Mammary epithelial cell (primary cell): ENCODE measurements at regions of chr11 and their contacts with region 1.

Region 1: DNA sequence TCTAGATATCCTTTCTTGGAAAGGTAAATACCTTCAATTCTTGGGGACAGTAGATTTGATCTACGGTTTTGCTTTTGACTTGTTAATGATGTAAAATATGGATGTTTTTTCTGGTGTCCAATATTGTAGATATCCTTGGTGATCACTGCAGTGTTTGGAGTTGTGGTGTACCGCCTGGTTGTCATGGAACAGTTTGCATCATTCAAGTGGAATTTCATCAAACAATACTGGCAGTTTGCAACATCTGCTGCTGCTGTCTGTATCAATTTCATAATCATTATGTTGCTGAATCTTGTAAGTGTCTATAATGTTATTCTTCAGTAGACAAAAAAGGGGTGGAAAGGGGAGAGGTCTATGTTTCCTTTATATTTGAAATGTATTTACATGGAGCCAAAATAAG is 27.4 kb upstream of the MUC15 start:
- DNase-seq: peak; percentile 81
- H3K4me3 ChIP-seq: no peak overlapping the region
- H3K27ac ChIP-seq: peak overlapping the region; percentile 33
- H3K4me1 ChIP-seq: no peaks in the 10 kb centered on the region
- H3K27me3 ChIP-seq: no peaks in the 10 kb centered on the region
- CTCF ChIP-seq: no peak

Region 2: GRCh38 chr11:26399336-26399735 is 200.1 kb before region 1 on chr11:
- CTCF ChIA-PET with region 1: no interaction called
- dilution Hi-C with region 1: no loop called
- in situ Hi-C with region 1: no loop called
- intact Hi-C with region 1: no loop called
- DNase-seq: no peak
- H3K4me3 ChIP-seq: no peak overlapping the region
- H3K27ac ChIP-seq: no peak overlapping the region
- H3K4me1 ChIP-seq: no peaks in the 10 kb centered on the region
- H3K27me3 ChIP-seq: no peaks in the 10 kb centered on the region
- CTCF ChIP-seq: no peak

Region 3: DNA sequence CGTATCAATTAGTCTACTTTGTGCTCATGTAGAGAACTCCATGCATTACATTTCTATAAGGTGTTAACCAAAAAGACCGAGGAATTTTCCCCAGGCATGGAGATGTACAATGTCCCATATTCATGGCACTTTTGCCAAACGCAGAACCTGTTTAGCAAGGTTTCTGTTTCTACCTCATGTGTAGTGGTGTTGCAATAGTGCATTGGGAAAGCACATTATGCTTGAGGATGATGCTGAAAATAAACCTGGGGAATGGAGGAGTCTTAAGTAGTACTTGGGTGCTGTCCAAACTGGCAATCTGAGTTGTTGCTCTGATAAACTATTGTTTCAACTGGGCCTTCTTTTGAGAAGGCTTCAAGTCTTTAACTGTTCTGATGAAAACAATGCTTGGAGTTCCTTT is 15.9 kb before region 1 on chr11:
- CTCF ChIA-PET with region 1: no interaction called
- dilution Hi-C with region 1: no loop called
- in situ Hi-C with region 1: no loop called
- intact Hi-C with region 1: loop called (anchors 2 kb)
- DNase-seq: peak; percentile 91
- H3K4me3 ChIP-seq: peak overlapping the region in 1 of 3 experiments; percentile 5
- H3K27ac ChIP-seq: peak overlapping the region; percentile 52
- H3K4me1 ChIP-seq: peaks cover 21% of the 10 kb centered on the region
- H3K27me3 ChIP-seq: no peaks in the 10 kb centered on the region
- CTCF ChIP-seq: no peak

Region 4: DNA sequence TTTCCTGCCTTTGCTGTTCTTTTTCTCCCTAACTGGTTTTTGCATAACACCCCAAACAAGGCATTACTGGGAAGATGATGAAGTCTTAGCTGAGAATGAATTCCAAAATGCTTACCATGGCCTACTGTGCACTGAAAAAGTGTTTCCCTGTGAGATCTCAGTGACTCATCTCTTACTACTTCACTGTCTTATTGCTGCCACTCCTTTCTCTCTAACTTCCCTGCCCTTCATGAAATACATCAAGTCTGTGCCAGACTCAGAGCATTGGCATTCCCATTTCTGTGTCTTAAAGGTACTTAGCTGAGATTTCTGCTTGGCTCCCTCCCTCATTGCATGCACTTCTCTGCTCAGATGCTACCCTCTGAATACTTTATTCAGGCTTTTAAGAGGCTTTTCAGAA is 21.7 kb after region 1 on chr11:
- CTCF ChIA-PET with region 1: no interaction called
- dilution Hi-C with region 1: no loop called
- in situ Hi-C with region 1: no loop called
- intact Hi-C with region 1: loop called (anchors 1 kb)
- DNase-seq: peak; percentile 91
- H3K4me3 ChIP-seq: no peak overlapping the region
- H3K27ac ChIP-seq: peak overlapping the region; percentile 98
- H3K4me1 ChIP-seq: peaks cover 31% of the 10 kb centered on the region
- H3K27me3 ChIP-seq: no peaks in the 10 kb centered on the region
- CTCF ChIP-seq: no peak